Prostate gland (tissue), 2 donors: ENCODE measurements at regions of chr15 and their contacts with region 1.

Region 1: DNA sequence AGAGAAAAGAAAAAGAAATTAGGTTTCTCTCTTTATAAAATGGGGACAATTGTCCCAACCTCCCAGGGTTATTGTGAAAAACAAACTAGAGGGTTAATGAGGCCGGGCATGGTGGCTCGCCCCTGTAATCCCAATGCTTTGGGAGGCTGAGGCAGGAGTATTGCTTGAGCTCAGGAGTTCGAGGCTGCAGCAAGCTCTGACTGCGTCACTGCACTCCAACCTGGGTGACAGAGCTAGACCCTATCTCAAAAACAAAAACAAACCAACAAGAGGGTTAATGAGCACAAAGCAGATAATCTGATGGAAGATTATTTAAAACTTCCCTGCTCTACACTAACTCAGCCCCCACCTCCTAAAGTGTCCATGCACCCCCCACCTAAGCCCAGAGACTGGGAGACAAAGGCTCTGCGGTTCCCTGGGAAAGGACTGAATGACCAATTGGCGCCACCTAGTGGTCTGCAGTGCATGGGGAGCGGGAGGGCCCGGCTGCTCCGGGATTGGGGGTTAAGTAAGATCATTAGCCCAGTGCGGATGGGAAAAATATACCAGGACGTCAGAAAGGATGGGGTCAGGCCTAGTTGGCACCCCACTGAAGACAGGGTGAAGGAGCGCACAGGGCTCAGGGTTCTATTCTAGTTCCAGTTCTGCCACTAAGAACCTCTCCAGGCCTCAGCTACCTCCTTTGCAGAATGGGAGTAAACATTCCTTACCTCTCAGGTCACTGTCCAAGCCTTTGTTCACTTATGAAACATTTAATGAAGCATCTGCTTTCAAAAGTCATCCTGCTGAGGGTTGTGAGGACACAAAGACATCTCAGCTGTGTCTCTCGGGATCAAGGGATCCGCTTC is 15.6 kb downstream of the PIF1 start:
- DNase-seq: peak; percentile 63
- H3K4me3 ChIP-seq: no peak overlapping the region
- H3K27ac ChIP-seq: no peak overlapping the region
- H3K4me1 ChIP-seq: no peaks in the 10 kb centered on the region
- H3K27me3 ChIP-seq: no peaks in the 10 kb centered on the region
- CTCF ChIP-seq: peak; percentile 79 to 94 (median 86)
- POLR2A ChIP-seq: no peak

Region 2: DNA sequence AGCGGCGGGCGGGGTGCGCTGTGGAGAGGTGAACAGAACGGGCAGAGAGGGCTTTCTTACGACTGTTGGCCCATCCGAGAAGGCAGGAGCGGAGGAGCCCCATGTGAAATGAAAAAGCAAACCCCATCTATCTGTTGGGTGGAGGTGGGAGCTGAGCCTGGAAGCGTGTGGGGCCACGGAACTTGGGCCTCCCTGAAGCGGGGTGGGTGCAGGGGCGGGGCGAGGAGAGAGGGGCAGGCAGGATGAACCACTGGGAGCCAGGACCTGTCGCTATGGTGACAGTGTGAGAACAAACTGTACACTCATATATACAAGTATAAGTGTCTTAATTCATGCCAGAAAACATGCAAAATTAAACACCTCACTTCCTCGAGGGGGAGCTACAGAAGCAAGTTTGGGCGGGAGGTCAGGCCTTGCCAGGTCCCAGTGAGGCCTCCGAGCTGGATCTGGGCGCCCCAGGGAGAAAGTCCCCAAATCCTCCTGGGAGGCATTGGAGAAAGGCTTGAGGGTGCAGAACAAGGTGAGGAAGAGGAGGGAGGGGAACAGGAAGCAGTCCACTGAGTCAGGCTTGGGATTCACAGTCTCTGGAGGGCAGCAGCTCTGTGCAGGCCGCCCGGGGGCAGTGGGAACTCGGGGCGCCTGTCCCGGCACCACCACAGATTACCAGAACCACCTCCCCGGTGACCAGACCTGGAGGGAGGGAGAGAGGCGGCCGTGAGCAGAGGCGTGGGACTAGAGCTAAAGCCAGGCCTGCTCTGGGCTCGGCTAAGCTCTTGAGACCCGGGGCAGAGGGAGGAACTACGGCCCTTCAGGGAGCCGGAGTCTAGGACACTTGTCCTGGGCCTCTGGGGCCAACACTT is 69.3 kb before region 1 on chr15:
- intact Hi-C with region 1: loop called (anchors 2 kb)
- DNase-seq: peak; percentile 46
- H3K4me3 ChIP-seq: no peak overlapping the region
- H3K27ac ChIP-seq: peak overlapping the region; percentile 58 to 64
- H3K4me1 ChIP-seq: peaks cover 3% of the 10 kb centered on the region
- H3K27me3 ChIP-seq: no peaks in the 10 kb centered on the region
- CTCF ChIP-seq: peak in 2 of 4 experiments; percentile 16 to 36
- POLR2A ChIP-seq: no peak

Region 3: DNA sequence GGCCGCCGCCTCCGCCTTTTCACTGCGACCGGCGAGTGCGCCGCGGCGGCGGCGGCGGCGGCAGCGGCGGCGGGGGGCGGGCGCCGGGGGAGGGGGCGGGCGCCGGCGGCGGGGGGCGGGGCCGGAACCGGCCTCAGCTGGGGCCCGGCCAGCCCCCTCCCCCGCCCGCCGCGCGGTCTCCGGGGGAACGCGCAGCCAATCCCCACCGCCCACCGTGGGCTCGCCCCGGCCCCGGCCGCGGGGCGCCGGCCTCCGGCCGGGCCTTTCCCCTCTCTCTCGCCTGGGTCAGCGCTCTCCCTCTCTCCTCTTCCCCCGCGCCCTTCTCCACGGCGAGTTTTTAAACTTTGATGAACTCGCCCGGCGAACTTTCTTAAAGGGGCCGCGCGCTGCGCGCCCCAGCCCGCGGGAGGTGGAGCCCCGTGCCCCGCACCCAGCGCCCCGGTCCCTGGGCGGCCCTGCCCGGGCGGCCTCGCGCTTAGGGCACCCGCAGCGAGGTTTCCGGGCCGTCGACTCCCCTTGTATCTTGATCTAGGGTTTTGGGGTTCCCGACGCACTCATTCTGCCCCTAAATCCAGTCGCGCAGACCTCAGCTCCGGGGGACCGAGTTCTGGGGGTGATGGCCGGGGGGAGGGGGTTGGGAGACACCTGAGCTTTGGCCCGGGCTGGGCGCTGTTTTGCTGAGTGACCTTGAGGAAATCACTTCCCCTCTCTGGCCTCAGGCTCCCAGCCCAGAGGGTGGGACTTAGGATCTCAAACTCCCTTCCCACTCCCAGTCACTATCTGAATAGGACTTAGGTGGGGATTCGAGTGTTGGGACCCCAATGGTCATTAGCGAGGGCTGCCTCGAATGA is 34.1 kb before region 1 on chr15 and contains the start of gene RBPMS2:
- intact Hi-C with region 1: loop called (anchors 2 kb)
- DNase-seq: no peak
- H3K4me3 ChIP-seq: peak within 1 kb of the TSS; percentile 64 to 79
- H3K27ac ChIP-seq: peak within 1 kb of the TSS; percentile 70 to 79
- H3K4me1 ChIP-seq: no peaks in the 10 kb centered on the region
- H3K27me3 ChIP-seq: no peaks in the 10 kb centered on the region
- CTCF ChIP-seq: no peak
- POLR2A ChIP-seq: no peak
- total RNA-seq, gene RBPMS2: 2.3 to 14.0 TPM

Region 4: GRCh38 chr15:64841258-64842095 is 31.6 kb after region 1 on chr15 and contains the start of gene PLEKHO2:
- intact Hi-C with region 1: no loop called
- DNase-seq: peak; percentile 97
- H3K4me3 ChIP-seq: peak within 1 kb of the TSS; percentile 91 to 96
- H3K27ac ChIP-seq: peak within 1 kb of the TSS; percentile 91 to 93
- H3K4me1 ChIP-seq: peaks cover 12% of the 10 kb centered on the region
- H3K27me3 ChIP-seq: no peaks in the 10 kb centered on the region
- CTCF ChIP-seq: peak in 1 of 4 experiments; percentile 18
- POLR2A ChIP-seq: peak; percentile 80
- total RNA-seq, gene PLEKHO2: 8.6 to 31.8 TPM

Region 5: GRCh38 chr15:64865998-64866520 is 56.2 kb after region 1 on chr15:
- intact Hi-C with region 1: no loop called
- DNase-seq: no peak
- H3K4me3 ChIP-seq: no peak overlapping the region
- H3K27ac ChIP-seq: no peak overlapping the region
- H3K4me1 ChIP-seq: no peaks in the 10 kb centered on the region
- H3K27me3 ChIP-seq: no peaks in the 10 kb centered on the region
- CTCF ChIP-seq: no peak
- POLR2A ChIP-seq: no peak